ENCODE measurements at regions of chr17 and their contacts with region 1.

Region 1: DNA sequence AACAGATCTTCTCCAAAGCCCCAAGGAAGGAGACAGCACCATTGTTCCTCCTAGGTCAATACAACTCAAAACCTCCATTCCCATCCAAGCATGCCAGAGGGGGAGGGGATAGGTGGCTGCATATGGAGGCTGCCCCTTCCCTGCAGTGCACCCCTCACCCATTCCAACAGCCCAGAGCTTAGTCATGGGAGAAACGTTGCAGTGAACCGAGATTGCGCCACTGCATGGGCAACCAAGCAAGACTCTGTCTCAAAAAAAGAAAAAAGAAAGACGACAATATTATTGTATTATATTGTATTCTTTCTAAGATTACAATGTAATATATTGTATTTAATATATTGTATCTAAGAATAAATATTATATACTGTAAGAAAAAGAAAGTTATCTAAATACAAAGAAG is 36.4 kb upstream of the CD300E start:
- DNase-seq: no peak
- ATAC-seq: no peak
- H3K4me3 Mint-ChIP-seq: no peak overlapping the region
- H3K27ac Mint-ChIP-seq: no peak overlapping the region
- H3K4me1 Mint-ChIP-seq: peaks cover 4% of the 10 kb centered on the region
- H3K27me3 Mint-ChIP-seq: peaks cover 44% of the 10 kb centered on the region
- CTCF ChIP-seq: no peak

Region 2: DNA sequence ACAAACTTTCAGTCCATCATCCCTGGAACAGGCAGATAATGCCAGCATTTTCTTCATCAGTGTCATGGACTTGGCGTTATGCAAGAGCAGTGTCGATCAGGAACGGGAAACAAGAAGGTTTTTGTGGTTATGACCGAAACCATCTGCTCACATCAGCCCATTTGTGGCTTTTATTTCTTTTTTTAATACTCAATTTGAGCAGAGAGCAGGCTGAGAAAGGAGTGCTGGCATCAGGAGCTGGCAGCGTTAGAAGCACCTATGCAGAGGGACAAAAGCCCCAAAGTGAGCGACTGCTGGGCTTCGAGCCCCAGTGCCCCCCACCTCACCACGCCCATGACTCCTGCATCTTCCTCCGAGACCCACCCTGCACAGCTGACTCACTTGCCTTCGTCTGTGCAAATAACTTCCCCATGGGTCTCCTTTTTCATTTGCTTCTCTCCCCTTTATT is 20.2 kb before region 1 on chr17:
- CTCF ChIA-PET with region 1: interaction called, 5 read pairs
- POLR2A ChIA-PET with region 1: interaction called, 7 read pairs
- intact Hi-C with region 1: loop called (anchors 1 kb)
- DNase-seq: peak; percentile 37
- ATAC-seq: peak; percentile 69
- H3K4me3 Mint-ChIP-seq: peak overlapping the region; percentile 42
- H3K27ac Mint-ChIP-seq: peak overlapping the region; percentile 78
- H3K4me1 Mint-ChIP-seq: peaks cover 85% of the 10 kb centered on the region
- H3K27me3 Mint-ChIP-seq: peaks cover 4% of the 10 kb centered on the region
- CTCF ChIP-seq: no peak

Region 3: GRCh38 chr17:74671031-74671771 is 11.3 kb after region 1 on chr17:
- CTCF ChIA-PET with region 1: interaction called, 10 read pairs
- POLR2A ChIA-PET with region 1: no interaction called
- intact Hi-C with region 1: no loop called
- DNase-seq: peak; percentile 29
- ATAC-seq: peak; percentile 77
- H3K4me3 Mint-ChIP-seq: no peak overlapping the region
- H3K27ac Mint-ChIP-seq: no peak overlapping the region
- H3K4me1 Mint-ChIP-seq: peaks cover 3% of the 10 kb centered on the region
- H3K27me3 Mint-ChIP-seq: peaks cover 66% of the 10 kb centered on the region
- CTCF ChIP-seq: no peak

Region 4: DNA sequence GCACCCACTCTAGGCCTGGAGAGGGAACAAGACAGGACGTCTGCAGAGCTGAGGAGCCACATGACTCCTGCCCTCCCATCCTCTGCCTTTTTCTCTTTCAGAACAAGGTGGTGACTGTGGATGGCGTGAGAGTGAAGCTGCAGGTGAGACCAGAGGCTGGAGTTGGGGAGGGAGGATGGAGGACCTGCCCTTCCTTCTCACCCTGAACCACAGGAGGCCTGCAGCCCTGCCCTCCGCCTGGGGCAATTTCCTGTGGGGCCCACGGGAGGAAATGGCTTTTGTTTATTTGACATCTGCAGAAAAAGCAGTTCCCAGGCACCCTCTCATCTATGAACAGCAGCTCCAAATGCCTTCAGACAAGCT is 82.2 kb after region 1 on chr17:
- CTCF ChIA-PET with region 1: interaction called, 187 read pairs
- POLR2A ChIA-PET with region 1: interaction called, 34 read pairs
- intact Hi-C with region 1: no loop called
- DNase-seq: no peak
- ATAC-seq: peak; percentile 35
- H3K4me3 Mint-ChIP-seq: peak overlapping the region; percentile 42
- H3K27ac Mint-ChIP-seq: peak overlapping the region; percentile 73
- H3K4me1 Mint-ChIP-seq: peaks cover 80% of the 10 kb centered on the region
- H3K27me3 Mint-ChIP-seq: no peaks in the 10 kb centered on the region
- CTCF ChIP-seq: no peak

Region 5: DNA sequence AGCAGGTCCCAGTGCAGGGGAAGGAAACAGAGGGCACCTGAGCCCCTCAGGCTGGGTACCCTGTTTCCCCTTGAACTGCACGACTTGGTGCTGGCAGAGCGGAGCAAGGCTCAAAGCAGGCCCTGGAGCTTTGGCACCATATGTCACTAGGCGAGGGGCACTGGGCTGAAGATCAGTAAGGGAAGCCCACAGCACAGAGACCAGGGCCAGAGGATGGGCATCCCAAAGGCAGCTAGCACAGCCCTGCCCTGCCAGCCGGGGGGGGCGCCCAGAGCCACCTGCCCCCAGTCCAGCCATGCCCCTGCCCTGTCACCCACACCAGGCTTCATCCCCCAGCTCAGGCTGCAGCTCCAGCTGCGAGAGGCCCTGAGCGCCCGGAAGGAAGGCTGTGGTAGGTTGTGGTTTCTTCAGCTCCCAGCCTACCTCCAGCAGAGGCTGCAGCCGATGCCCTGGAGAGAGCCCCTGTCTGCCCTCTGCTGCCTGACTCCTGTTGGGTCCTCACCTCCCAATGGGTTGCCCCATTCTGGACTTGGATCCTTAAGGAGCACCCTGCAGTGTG is 99.4 kb after region 1 on chr17:
- CTCF ChIA-PET with region 1: interaction called, 24 read pairs
- POLR2A ChIA-PET with region 1: interaction called, 3 read pairs
- intact Hi-C with region 1: no loop called
- DNase-seq: no peak
- ATAC-seq: peak; percentile 69
- H3K4me3 Mint-ChIP-seq: peak overlapping the region; percentile 41
- H3K27ac Mint-ChIP-seq: no peak overlapping the region
- H3K4me1 Mint-ChIP-seq: peaks cover 58% of the 10 kb centered on the region
- H3K27me3 Mint-ChIP-seq: no peaks in the 10 kb centered on the region
- CTCF ChIP-seq: no peak

Region 6: DNA sequence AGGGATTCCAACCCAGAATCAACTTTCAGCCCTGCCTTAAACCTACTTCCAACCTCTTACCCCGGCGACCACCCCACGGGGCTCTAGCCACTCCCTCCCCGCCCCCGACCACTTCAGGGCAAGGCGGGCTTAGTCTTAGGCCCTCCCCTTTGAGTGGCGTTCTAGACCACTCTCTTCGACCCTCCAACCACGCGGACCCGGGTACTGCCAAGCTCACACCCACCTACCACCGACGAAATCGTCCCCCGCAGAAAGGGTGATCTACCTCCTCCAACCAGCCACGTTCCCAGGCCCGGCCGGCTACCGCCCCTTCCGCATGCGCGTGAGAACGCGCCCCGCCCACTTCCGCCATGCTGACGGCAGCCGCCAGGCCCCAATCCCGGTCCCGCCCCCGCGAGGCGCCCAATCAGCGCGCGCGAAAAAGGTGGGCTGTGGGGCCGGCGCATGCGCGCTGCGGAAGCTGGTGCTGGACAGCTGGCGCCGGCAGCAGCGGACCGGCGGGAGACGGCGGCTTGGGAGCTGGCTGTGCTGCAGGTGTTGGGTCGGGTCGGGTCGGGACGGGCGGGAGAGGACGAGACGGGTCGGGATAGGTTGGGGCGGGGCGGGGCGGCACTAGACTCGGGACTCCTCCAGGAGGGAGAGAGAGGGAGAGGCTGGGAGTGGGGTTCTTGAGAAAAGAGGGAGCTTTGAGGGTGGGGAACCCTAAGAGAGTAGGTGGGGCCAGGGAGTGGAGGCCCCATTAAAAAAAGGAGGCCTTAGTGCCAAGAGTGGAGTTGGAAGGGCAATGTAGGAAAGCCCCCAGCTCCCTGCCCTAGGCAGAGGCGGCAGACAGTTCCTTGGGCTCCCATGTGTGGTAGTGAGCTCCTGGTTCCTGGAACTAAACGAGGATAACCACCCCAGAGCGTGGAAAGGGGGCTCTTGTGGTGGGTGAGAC is 116.4 kb after region 1 on chr17 and contains the start of gene NAT9:
- CTCF ChIA-PET with region 1: interaction called, 70 read pairs
- POLR2A ChIA-PET with region 1: interaction called, 5 read pairs
- intact Hi-C with region 1: loop called (anchors 2 kb)
- DNase-seq: peak; percentile 99
- ATAC-seq: peak; percentile 82
- H3K4me3 Mint-ChIP-seq: peak within 1 kb of the TSS; percentile 99
- H3K27ac Mint-ChIP-seq: peak within 1 kb of the TSS; percentile 89
- H3K4me1 Mint-ChIP-seq: peaks cover 61% of the 10 kb centered on the region
- H3K27me3 Mint-ChIP-seq: no peaks in the 10 kb centered on the region
- CTCF ChIP-seq: no peak
- total RNA-seq, gene NAT9: 59.4 and 79.7 TPM in 2 replicates

Measured in activated B cell treated with CpG ODN at 0.5 μM for 24 hours (primary cell).